ENCODE measurements at regions of chr4 and their contacts with region 1.

Region 1: DNA sequence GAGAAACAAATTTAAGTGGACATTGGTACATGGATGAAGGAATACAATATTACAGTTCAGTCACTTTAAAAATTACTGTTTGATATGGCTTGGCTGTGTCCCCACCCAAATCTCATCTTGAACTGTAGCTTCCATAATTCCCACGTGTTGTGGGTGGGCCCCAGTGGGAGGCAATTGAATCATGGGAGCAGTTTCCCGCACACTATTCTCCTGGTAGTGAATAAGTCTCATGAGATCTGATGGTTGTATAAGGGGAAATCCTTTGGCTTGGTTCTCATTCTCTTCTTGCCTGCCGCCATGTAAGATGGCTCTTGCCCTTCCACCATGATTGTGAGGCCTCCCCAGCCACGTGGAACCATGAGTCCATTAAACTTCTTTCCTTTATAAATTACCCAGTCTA is 804.2 kb upstream of the FRG1 start:
- DNase-seq: peak in 1 of 2 experiments; percentile 11
- ATAC-seq: no peak
- H3K4me3 ChIP-seq: no peak overlapping the region
- H3K27ac ChIP-seq: peak overlapping the region; percentile 63 to 65; a peak in 4 of 6 replicates
- H3K4me1 ChIP-seq: peaks cover 4% of the 10 kb centered on the region; the same call in 1 of the 3 replicates
- CTCF ChIP-seq: no peak
- EP300 ChIP-seq: no peak
- POLR2A ChIP-seq: no peak
- RAD21 ChIP-seq: no peak

Region 2: GRCh38 chr4:189124149-189124758 is 12.2 kb before region 1 on chr4:
- CTCF ChIA-PET with region 1: interaction called, 12 read pairs
- POLR2A ChIA-PET with region 1: no interaction called
- DNase-seq: peak in 1 of 2 experiments; percentile 58
- ATAC-seq: peak in 1 of 2 experiments; percentile 66; a peak in 2 of 6 replicates
- H3K4me3 ChIP-seq: no peak overlapping the region
- H3K27ac ChIP-seq: peak overlapping the region in 1 of 2 experiments; percentile 16; a peak in 2 of 6 replicates
- H3K4me1 ChIP-seq: peaks cover 5% of the 10 kb centered on the region; the same call in 2 of the 3 replicates
- CTCF ChIP-seq: peak; percentile 62
- EP300 ChIP-seq: no peak
- POLR2A ChIP-seq: no peak
- RAD21 ChIP-seq: peak; percentile 85 to 88

Region 3: DNA sequence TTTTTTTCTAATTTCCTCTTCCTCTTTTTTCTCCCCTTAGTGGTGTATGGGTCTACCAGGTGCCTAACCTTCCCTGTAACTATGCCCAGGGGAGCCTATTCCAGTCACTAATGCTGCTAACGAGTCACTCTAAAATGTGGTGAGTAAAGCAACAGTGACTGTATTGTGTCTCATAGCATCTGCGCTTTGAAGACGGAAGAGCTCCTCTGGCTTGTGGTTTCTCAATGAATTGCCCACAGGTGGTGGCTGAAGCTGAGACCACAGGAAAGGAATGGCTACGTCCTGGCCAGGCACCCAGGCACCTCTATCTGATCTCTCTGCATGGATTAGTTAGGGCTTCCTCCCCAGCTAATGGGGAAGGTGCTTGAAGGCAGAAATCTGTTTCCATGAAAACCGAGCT is 40.7 kb after region 1 on chr4:
- CTCF ChIA-PET with region 1: no interaction called
- POLR2A ChIA-PET with region 1: no interaction called
- DNase-seq: no peak
- ATAC-seq: no peak
- H3K4me3 ChIP-seq: no peak overlapping the region
- H3K27ac ChIP-seq: no peak overlapping the region
- H3K4me1 ChIP-seq: no peaks in the 10 kb centered on the region
- CTCF ChIP-seq: no peak
- EP300 ChIP-seq: no peak
- POLR2A ChIP-seq: no peak
- RAD21 ChIP-seq: no peak